Activated T-helper 1 cell treated with anti-CD3 and anti-CD28 coated beads, Interleukin-12 subunit alpha, Interleukin-12 subunit beta, Interleukin-2, Interleukin-4 antibody, amounts not matched to agents 30 ng/mL and 10 ng/mL and 1 ng/mL, durations not matched to agents 14 hours and 24 hours and 36 hours (primary cell): ENCODE measurements at regions of chr12 and their contacts with region 1.

Region 1: DNA sequence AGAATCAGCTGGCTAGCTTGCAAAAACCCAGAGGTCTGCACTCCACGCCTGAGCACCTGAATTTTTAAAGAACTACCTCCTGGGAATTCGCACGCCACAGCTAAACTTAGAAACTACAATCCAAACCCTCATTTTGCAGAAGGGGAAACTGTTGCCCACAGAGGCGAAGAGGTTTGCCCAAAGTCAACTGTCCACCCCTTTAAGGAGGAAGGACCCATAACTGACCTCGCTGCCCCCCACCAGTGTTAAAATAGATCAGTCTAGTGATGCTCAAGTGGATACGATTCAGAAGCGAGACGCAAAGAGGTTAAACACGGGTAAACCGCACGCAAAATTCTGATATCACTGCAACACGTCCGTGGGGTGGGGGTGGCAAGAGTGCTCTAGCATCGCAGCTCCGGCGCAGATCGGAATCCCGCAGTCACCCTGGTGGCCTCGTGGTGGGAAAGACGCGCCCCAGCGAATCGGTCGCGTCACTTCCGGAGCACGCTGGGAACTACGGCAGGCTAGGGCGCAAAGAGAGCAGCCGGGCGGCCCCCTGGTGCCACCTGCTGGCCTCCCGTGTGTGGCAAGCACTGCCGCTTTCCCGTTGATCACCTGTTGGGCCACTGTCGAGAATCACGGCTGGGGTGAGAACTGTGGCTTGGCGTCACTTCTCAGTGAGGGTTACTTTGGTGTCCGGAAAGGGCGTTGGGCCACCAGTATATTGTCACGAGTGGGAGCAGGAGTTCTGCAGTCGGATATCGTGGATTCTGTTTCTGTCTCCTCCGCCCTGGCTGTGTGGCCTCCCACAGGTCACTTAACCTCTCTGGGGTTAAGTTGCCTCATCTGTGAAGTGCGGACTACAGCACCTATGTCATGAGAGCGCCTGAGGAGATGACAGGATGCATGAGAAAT is at the start of gene ALKBH2:
- DNase-seq: peak; percentile 92
- H3K4me3 Mint-ChIP-seq: peak within 1 kb of the TSS; percentile 89
- H3K27ac Mint-ChIP-seq: peak within 1 kb of the TSS; percentile 84
- H3K4me1 Mint-ChIP-seq: peaks cover 22% of the 10 kb centered on the region
- H3K27me3 Mint-ChIP-seq: no peaks in the 10 kb centered on the region
- total RNA-seq, gene ALKBH2: 43.6 and 47.4 TPM in 2 replicates

Region 2: DNA sequence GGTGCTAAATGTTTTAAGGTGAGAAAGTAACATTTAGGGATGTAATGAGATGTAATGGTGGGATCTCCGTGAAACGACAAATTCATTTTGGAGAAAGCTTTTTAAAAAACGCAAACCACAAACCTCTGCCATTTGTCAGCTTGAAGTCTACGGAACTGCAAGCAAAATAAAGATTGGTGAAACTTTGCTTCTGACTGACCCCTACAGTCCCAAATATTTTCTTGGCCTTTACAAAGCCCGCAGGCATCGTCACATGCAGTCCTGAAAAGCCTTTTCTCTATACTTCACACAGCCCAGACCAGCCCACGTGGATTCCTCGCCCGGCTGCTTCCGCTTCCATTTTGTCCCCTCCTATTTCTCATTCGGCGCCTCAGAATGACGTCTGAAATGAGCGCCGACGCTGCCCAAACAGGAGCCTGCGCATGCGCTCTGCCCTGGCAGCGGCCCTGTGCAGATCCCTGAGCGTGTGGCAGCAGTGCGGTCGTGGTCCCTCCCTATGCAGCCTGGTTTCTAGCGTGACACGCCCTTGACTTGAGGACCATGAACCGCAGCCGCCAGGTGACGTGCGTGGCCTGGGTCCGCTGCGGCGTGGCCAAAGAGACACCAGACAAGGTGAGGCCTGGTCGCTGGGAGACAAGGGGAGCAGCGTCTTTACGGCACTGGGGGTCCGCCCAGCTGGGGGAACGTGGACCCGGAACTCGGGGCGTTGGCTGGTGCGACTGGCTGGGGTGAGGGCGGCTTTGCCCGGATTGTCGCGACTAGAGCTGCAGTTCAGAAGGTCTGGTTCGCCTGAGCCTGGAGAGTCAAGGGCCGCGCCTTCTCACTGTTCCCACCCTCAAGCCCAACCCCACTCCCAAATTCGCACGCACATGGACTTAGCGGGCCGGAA is 1407.7 kb before region 1 on chr12 and contains the start of gene PWP1:
- intact Hi-C with region 1: loop called (anchors 1 kb)
- DNase-seq: peak; percentile 95
- H3K4me3 Mint-ChIP-seq: peak within 1 kb of the TSS; percentile 96
- H3K27ac Mint-ChIP-seq: peak within 1 kb of the TSS; percentile 97
- H3K4me1 Mint-ChIP-seq: peaks cover 36% of the 10 kb centered on the region
- H3K27me3 Mint-ChIP-seq: no peaks in the 10 kb centered on the region
- total RNA-seq, gene PWP1: 54.4 and 57.1 TPM in 2 replicates

Region 3: GRCh38 chr12:108562348-108563135 is 530.7 kb before region 1 on chr12 and contains the start of gene ISCU:
- intact Hi-C with region 1: loop called (anchors 1 kb)
- DNase-seq: peak; percentile 99
- H3K4me3 Mint-ChIP-seq: peak within 1 kb of the TSS; percentile 100
- H3K27ac Mint-ChIP-seq: peak within 1 kb of the TSS; percentile 99
- H3K4me1 Mint-ChIP-seq: peaks cover 58% of the 10 kb centered on the region
- H3K27me3 Mint-ChIP-seq: no peaks in the 10 kb centered on the region
- total RNA-seq, gene ISCU: 73.8 and 74.9 TPM in 2 replicates

Region 4: DNA sequence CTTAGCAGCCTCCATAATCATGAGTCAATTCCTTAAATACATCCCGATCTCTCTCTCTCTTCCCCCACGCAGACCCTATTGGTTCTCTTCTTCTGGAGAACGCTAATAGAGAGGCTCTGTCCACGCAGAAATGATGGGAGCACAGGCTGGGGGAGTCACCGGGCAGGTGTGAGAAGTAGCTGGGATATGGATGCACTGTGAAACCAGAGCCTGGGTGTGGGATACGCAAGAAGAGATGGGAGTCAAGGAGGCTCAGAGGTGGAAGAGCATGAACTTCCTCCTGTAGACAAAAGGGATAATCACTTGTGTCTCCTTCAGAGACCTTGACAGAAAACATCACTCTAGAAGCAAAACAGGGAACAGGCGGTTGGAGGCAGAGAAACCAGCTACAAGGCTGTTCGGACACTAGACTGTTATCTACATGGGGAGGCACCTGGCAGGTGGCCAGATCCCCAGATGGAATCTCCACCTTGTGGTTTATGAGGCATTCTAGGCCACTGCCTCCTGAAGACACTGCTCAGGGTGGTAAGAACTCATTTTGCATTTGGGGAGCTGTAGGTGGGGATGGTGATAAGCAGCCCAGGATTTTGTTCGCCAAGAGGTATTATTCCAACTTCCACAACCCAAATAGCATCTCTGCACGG is 452.3 kb before region 1 on chr12:
- intact Hi-C with region 1: no loop called
- DNase-seq: no peak
- H3K4me3 Mint-ChIP-seq: no peak overlapping the region
- H3K27ac Mint-ChIP-seq: no peak overlapping the region
- H3K4me1 Mint-ChIP-seq: peaks cover 27% of the 10 kb centered on the region
- H3K27me3 Mint-ChIP-seq: no peaks in the 10 kb centered on the region

Region 5: GRCh38 chr12:108664338-108665258 is 428.7 kb before region 1 on chr12:
- intact Hi-C with region 1: loop called (anchors 1 kb)
- DNase-seq: peak; percentile 79
- H3K4me3 Mint-ChIP-seq: no peak overlapping the region
- H3K27ac Mint-ChIP-seq: peak overlapping the region; percentile 72
- H3K4me1 Mint-ChIP-seq: peaks cover 17% of the 10 kb centered on the region
- H3K27me3 Mint-ChIP-seq: no peaks in the 10 kb centered on the region

Region 6: DNA sequence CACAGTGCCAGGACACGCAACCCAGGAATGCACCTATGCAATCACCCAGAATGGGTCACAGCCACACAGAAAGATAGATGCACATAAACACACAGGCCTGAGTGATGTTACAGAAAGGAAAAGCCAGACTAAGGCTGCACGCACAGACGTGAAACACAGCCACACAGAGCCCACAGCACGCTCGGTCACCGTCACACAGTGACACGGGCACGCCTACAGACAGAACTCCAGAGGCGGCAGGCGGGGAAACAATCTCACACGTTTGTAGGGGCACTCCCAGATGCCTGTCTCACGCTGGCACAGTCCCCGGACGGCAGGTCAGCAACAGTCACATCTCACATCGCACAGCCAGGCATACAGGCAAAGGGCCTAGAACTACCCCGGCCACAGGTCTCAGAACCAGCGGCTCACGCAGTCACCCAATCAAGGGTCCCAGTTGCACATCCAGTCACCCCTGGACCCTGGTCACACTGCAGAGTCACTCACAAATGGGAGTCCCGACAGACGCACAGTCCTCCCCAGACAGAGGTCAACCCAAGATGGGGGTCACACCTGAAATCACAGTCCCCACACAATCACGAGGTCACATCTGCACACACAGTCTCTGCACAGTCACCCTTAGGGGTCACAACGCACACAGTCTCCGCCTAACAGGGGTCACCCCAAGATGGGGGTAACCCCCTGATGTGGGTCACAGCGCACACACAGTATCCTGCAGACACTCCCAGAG is 236.7 kb before region 1 on chr12:
- intact Hi-C with region 1: loop called (anchors 1 kb)
- DNase-seq: peak; percentile 45
- H3K4me3 Mint-ChIP-seq: peak overlapping the region; percentile 96
- H3K27ac Mint-ChIP-seq: peak overlapping the region; percentile 96
- H3K4me1 Mint-ChIP-seq: peaks cover 52% of the 10 kb centered on the region
- H3K27me3 Mint-ChIP-seq: peaks cover 10% of the 10 kb centered on the region

Region 7: DNA sequence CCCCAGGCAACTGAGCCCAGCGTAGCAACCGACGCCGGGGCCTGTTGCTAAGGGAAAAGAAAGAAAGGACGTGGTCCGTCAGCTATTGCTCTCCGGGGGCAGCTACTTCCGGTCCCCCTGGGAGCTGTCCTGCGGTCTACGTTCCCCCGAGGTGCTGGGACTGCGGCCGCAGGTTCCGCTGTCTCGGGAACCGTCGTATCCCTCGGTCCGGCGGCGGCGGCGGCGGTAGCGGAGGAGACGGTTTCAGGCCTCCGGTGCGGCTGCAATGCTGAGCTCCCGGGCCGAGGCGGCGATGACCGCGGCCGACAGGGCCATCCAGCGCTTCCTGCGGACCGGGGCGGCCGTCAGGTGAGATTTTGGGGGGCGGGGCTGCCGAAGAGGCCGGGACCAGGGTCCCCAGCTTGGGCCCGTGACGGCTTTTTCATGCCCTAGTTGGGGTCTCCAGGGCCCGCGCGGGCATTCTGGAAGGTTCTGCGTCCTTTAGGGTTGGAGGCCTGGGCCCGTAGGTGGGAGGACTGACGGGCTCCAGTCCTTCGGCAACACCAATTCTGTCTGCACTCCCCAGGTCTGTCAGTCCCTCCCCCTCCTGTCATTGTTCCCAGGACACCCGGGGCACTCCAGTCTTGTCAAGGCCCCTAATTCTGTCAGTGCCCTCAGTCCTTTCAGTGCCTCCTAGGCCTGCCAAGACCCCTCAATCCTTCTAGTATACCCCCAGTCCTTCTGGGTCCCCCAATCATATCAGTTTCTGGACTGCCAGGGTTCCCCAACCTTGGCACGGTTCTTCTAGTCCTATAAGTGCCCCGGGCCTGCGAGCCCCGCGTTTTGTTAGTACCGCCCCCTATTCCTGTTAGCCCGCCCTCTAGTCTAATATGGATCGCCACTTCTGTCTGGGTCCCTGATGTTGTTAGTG is 40.6 kb before region 1 on chr12 and contains the start of gene USP30:
- intact Hi-C with region 1: loop called (anchors 1 kb)
- DNase-seq: peak; percentile 77
- H3K4me3 Mint-ChIP-seq: peak within 1 kb of the TSS; percentile 92
- H3K27ac Mint-ChIP-seq: peak within 1 kb of the TSS; percentile 92
- H3K4me1 Mint-ChIP-seq: peaks cover 19% of the 10 kb centered on the region
- H3K27me3 Mint-ChIP-seq: no peaks in the 10 kb centered on the region
- total RNA-seq, gene USP30: 9.0 and 10.5 TPM in 2 replicates

Region 8: GRCh38 chr12:109477185-109477962 is 384.1 kb after region 1 on chr12 and contains the starts of genes KCTD10 and UBE3B:
- intact Hi-C with region 1: loop called (anchors 2 kb)
- DNase-seq: peak; percentile 84
- H3K4me3 Mint-ChIP-seq: peak within 1 kb of the TSS; percentile 94
- H3K27ac Mint-ChIP-seq: peak within 1 kb of the TSS; percentile 98
- H3K4me1 Mint-ChIP-seq: peaks cover 40% of the 10 kb centered on the region
- H3K27me3 Mint-ChIP-seq: no peaks in the 10 kb centered on the region
- total RNA-seq, gene KCTD10: 48.3 and 51.2 TPM in 2 replicates
- total RNA-seq, gene UBE3B: 28.7 and 29.3 TPM in 2 replicates